Body of pancreas (tissue), 4 donors: ENCODE measurements at regions of chr3 and their contacts with region 1.

Region 1: GRCh38 chr3:124761250-124761796 is 31.1 kb downstream of the UMPS start:
- DNase-seq: peak; percentile 85 to 90 (median 87)
- ATAC-seq: peak; percentile 88
- H3K4me3 ChIP-seq: no peak overlapping the region
- H3K27ac ChIP-seq: peak overlapping the region in 2 of 4 donors; percentile 35 to 53
- H3K4me1 ChIP-seq: peaks cover 18% of the 10 kb centered on the region
- H3K27me3 ChIP-seq: no peaks in the 10 kb centered on the region
- CTCF ChIP-seq: peak; percentile 85 to 97 (median 93)
- POLR2A ChIP-seq: no peak

Region 2: DNA sequence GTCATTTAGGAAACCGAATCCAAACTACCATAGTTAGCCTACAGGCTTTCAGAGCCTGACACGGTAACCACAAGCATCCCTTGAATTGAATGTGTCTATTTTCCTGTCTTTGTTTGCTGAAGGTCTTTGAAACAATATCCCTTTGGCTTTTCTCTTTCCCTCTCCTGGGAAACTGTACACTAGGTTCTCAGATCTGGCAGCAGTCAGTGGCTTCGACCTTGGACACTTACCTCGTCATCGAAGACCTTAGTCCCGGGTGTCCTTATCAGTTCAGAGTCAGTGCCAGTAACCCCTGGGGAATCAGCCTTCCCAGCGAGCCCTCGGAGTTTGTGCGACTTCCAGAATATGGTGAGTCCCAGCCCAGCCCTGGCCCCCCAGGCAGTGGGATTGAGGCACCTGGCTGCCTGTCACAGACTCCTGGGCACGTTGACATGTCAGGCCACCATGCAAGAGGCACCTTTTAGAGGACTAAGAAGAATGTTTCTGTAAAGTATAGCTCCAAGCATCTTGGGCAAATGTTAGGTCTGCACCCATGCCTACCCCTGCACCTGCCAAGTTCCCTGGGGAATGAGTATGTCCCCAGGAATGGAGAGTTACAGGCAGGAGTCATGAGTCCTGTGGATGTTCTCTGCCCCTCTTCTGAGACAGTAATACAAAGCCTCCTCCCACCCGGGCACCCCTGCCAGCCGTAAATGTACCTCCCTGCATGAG is 61.5 kb before region 1 on chr3:
- intact Hi-C with region 1: no loop called
- DNase-seq: peak; percentile 78 to 93 (median 84)
- ATAC-seq: peak; percentile 97
- H3K4me3 ChIP-seq: no peak overlapping the region
- H3K27ac ChIP-seq: peak overlapping the region; percentile 71 to 84 (median 78)
- H3K4me1 ChIP-seq: peaks cover 24% of the 10 kb centered on the region
- H3K27me3 ChIP-seq: no peaks in the 10 kb centered on the region
- CTCF ChIP-seq: no peak
- POLR2A ChIP-seq: peak in 2 of 3 donors; percentile 17 to 22

Region 3: GRCh38 chr3:124893526-124893925 is 132.2 kb after region 1 on chr3:
- intact Hi-C with region 1: no loop called
- DNase-seq: no peak
- ATAC-seq: no peak
- H3K4me3 ChIP-seq: no peak overlapping the region
- H3K27ac ChIP-seq: no peak overlapping the region
- H3K4me1 ChIP-seq: no peaks in the 10 kb centered on the region
- H3K27me3 ChIP-seq: no peaks in the 10 kb centered on the region
- CTCF ChIP-seq: no peak
- POLR2A ChIP-seq: no peak

Region 4: GRCh38 chr3:124903907-124904834 is 142.8 kb after region 1 on chr3:
- intact Hi-C with region 1: loop called (anchors 5 kb)
- DNase-seq: no peak
- ATAC-seq: no peak
- H3K4me3 ChIP-seq: no peak overlapping the region
- H3K27ac ChIP-seq: no peak overlapping the region
- H3K4me1 ChIP-seq: peaks cover 5% of the 10 kb centered on the region
- H3K27me3 ChIP-seq: no peaks in the 10 kb centered on the region
- CTCF ChIP-seq: no peak
- POLR2A ChIP-seq: no peak